ENCODE measurements at regions of chr10 and their contacts with region 1.

Region 1: DNA sequence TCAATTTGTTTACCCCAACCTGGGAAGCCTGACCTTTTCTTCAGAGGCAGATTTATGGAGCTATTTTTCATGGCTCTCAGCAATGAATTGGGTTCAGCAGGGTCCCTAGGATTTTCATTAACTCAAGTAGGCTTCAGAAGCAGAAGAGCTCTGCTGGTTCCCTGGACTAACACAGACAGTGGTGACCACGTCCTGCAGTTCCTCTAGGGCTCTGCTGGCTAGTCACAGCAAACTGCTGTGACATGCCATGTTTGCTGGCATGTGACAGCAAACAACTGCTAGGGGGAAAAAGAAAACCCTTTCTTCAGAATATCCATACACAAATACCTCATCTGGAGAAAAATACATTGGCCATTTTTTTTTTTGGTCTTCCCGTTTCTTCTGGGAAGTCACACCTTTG is 13.2 kb downstream of the BAMBI start:
- H3K4me3 ChIP-seq: no peak overlapping the region
- H3K27ac ChIP-seq: no peak overlapping the region; the same call in 1 of the 2 replicates
- H3K4me1 ChIP-seq: peaks cover 15% of the 10 kb centered on the region
- CTCF ChIP-seq: no peak

Region 2: GRCh38 chr10:28449926-28450325 is 240.6 kb before region 1 on chr10:
- CTCF ChIA-PET with region 1: no interaction called
- POLR2A ChIA-PET with region 1: no interaction called
- H3K4me3 ChIP-seq: no peak overlapping the region
- H3K27ac ChIP-seq: no peak overlapping the region
- H3K4me1 ChIP-seq: no peaks in the 10 kb centered on the region
- CTCF ChIP-seq: no peak

Region 3: GRCh38 chr10:29158066-29158465 is 467.5 kb after region 1 on chr10:
- CTCF ChIA-PET with region 1: no interaction called
- POLR2A ChIA-PET with region 1: interaction called, 10 read pairs
- H3K4me3 ChIP-seq: no peak overlapping the region
- H3K27ac ChIP-seq: no peak overlapping the region
- H3K4me1 ChIP-seq: no peaks in the 10 kb centered on the region
- CTCF ChIP-seq: no peak

Measured in HEK293 (cell line).